Psoas muscle (tissue), 8 donors: ENCODE measurements at regions of chr17 and their contacts with region 1.

Region 1: DNA sequence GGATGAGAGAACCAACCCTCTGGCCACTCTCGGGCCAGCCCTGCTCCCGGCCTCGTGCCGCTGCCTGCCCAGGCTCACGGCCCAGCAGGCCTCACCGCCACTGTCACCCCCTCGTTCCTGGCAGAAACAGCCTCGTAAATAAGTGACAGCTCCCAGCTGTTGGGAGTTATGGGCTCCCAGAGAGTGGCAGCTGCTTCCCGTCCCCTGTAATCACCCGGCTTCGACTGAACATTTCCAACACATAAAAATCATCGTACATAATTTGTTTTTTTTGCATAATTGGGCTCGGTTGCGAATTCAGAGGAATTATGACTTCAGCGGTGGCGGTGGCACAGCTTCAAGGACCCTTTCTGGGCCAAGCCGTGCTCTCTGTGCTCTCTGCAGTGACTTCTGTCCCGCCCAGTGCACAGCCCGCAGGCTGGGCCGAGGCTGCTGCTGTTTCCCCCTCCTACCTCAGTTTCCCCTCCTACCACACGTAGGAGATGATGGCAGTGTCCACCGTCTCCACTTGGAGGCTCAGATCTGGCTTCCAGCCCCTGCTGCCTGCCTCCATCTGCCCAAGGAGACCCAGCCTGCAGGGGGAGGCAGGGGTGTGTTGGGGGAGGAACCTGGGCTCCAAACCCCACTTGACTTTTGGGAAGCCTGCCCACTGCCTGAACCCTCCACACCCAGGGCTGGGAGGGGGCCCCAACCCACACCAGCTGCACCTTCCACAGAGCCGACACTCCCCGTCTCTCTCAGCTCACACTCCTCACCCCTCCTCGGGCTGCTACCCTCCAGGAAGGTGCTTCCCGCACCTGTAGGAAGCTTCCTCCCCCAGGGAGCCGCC is 84.9 kb downstream of the RTN4RL1 start:
- DNase-seq: peak; percentile 52 to 88
- ATAC-seq: peak; percentile 94 to 99 (median 96)
- H3K4me3 ChIP-seq: peak overlapping the region; percentile 28
- H3K27ac ChIP-seq: peak overlapping the region; percentile 95
- H3K4me1 ChIP-seq: peaks cover 23% of the 10 kb centered on the region
- H3K27me3 ChIP-seq: no peaks in the 10 kb centered on the region
- CTCF ChIP-seq: no peak

Region 2: GRCh38 chr17:1796800-1797199 is 143.4 kb before region 1 on chr17:
- intact Hi-C with region 1: no loop called
- DNase-seq: no peak
- ATAC-seq: peak; percentile 82 to 90 (median 84)
- H3K4me3 ChIP-seq: peak overlapping the region; percentile 21
- H3K27ac ChIP-seq: peak overlapping the region; percentile 93
- H3K4me1 ChIP-seq: peaks cover 55% of the 10 kb centered on the region
- H3K27me3 ChIP-seq: no peaks in the 10 kb centered on the region
- CTCF ChIP-seq: no peak

Region 3: GRCh38 chr17:1908699-1909309 is 31.4 kb before region 1 on chr17:
- intact Hi-C with region 1: no loop called
- DNase-seq: peak; percentile 37 to 66
- ATAC-seq: peak; percentile 73 to 82 (median 76)
- H3K4me3 ChIP-seq: peak overlapping the region; percentile 59
- H3K27ac ChIP-seq: peak overlapping the region; percentile 42
- H3K4me1 ChIP-seq: peaks cover 35% of the 10 kb centered on the region
- H3K27me3 ChIP-seq: no peaks in the 10 kb centered on the region
- CTCF ChIP-seq: peak; percentile 73

Region 4: GRCh38 chr17:1920948-1921351 is 19.2 kb before region 1 on chr17:
- intact Hi-C with region 1: loop called in 1 of 2 experiments (anchors 1 kb)
- DNase-seq: peak; percentile 40 to 92
- ATAC-seq: peak; percentile 82 to 99 (median 98)
- H3K4me3 ChIP-seq: no peak overlapping the region
- H3K27ac ChIP-seq: peak overlapping the region; percentile 61
- H3K4me1 ChIP-seq: peaks cover 5% of the 10 kb centered on the region
- H3K27me3 ChIP-seq: no peaks in the 10 kb centered on the region
- CTCF ChIP-seq: no peak

Region 5: GRCh38 chr17:2070241-2071023 is 130.2 kb after region 1 on chr17:
- intact Hi-C with region 1: no loop called
- DNase-seq: no peak
- ATAC-seq: peak in 1 of 4 donors; percentile 21
- H3K4me3 ChIP-seq: no peak overlapping the region
- H3K27ac ChIP-seq: peak overlapping the region; percentile 76
- H3K4me1 ChIP-seq: peaks cover 7% of the 10 kb centered on the region
- H3K27me3 ChIP-seq: no peaks in the 10 kb centered on the region
- CTCF ChIP-seq: no peak

Region 6: DNA sequence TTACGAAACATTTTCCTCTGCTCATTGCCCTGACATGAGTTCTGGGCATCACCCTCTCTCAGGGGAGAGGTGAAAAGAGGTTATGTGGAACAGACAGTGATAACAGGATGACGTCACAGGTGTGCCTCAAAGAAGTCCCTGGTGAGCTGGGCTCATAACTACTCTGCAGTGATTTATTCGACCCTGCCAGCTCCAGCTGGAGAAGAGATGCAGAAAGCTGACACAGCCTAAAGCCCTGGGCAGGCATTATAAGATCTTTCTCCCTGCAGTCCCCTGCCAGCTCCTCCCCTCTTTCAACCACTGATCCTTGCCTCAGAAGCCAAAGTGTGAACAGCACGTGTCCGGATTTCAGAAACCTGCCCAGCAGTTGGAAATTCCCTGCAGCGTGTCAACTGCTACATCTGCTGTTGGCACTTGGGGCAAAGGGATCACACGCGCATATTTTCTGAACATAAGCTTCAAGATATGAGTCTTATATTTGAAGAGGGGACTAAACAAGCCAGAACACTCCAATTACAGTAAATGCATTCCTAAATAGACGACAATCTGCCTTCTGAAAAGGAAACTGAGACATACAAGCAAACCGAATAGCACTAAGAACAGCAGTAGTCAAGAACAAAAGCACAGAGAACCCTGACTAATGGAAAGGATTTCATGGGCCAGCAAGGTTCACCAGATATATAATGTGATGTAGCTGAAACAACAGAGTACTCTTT is 282.9 kb after region 1 on chr17:
- intact Hi-C with region 1: no loop called
- DNase-seq: peak; percentile 68 to 84
- ATAC-seq: peak; percentile 90 to 96 (median 92)
- H3K4me3 ChIP-seq: peak overlapping the region; percentile 28
- H3K27ac ChIP-seq: peak overlapping the region; percentile 84
- H3K4me1 ChIP-seq: peaks cover 47% of the 10 kb centered on the region
- H3K27me3 ChIP-seq: no peaks in the 10 kb centered on the region
- CTCF ChIP-seq: no peak